ENCODE measurements at regions of chr1 and their contacts with region 1.

Region 1: GRCh38 chr1:59947047-59947938 is 20.7 kb upstream of the CYP2J2 start:
- DNase-seq: peak; percentile 63
- ATAC-seq: peak; percentile 99
- H3K4me3 ChIP-seq: no peak overlapping the region
- H3K27ac ChIP-seq: no peak overlapping the region
- H3K4me1 ChIP-seq: no peaks in the 10 kb centered on the region
- H3K27me3 ChIP-seq: no peaks in the 10 kb centered on the region; the same call in 1 of the 2 replicates
- CTCF ChIP-seq: peak; percentile 83
- POLR2A ChIP-seq: no peak
- RAD21 ChIP-seq: peak; percentile 81

Region 2: DNA sequence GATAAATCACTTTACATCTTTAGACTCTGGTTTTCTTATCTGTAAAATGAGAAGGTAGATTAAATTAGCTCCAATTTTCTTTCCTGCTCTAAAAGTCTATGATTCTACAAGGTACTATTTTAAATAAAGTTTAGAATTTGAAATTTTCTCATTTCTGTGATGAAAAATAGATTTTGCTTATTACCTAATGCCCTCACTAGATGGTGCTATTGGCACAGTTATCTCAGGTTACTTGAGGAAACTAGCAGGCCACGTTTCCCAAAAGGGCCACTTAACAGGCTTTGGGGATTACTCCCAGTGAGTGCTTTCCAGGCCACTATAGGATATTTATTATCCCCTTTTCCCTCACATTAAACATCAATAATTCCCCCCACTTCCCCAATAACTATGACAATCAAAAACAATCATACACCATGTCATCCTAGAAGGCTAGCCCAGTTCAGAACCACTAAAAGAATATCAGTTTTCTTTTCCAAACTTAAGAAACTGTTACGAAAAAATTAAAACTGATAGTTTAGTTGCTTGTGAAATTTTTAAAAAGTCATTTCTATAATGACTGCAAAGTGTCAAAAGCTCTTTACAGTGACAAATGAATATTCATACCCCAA is 1431.4 kb before region 1 on chr1:
- CTCF ChIA-PET with region 1: no interaction called
- POLR2A ChIA-PET with region 1: no interaction called
- dilution Hi-C with region 1: no loop called
- in situ Hi-C with region 1: no loop called
- intact Hi-C with region 1: loop called (anchors 5 kb)
- DNase-seq: peak; percentile 85
- ATAC-seq: peak; percentile 79
- H3K4me3 ChIP-seq: no peak overlapping the region
- H3K27ac ChIP-seq: no peak overlapping the region
- H3K4me1 ChIP-seq: no peaks in the 10 kb centered on the region
- H3K27me3 ChIP-seq: no peaks in the 10 kb centered on the region
- CTCF ChIP-seq: peak; percentile 85
- POLR2A ChIP-seq: no peak
- RAD21 ChIP-seq: peak; percentile 86

Region 3: DNA sequence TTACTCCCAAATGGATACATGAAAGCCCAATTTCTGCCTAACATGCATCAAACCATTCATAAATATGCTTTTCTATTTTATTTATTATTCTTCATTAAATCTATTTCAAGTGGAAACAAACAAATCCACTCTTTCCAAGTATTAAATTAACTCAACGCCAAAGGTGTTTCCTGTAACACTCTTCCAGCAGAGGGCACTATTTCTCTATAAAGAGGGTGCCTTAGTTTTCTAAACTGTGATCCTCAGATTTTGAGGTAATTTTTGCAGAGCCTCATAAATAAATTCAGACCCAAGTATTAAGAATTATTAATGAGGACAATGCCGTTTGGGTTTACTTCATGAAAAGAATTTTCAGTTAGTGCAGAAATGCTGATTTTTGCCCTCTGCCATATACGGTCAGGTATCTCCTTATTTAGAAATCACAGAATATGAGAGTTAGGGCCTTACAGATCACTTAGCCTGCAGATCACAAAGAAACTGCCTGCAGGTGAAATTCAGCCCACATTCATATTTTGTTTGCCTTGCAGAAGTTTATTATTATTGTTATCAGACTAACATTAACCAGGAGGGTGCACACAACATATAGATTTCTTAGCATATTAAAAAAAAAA is 1207.3 kb before region 1 on chr1:
- CTCF ChIA-PET with region 1: no interaction called
- POLR2A ChIA-PET with region 1: no interaction called
- dilution Hi-C with region 1: no loop called
- in situ Hi-C with region 1: loop called (anchors 25 kb)
- intact Hi-C with region 1: loop called (anchors 5 kb)
- DNase-seq: peak; percentile 71
- ATAC-seq: peak; percentile 64; the same call in 1 of the 2 replicates
- H3K4me3 ChIP-seq: no peak overlapping the region
- H3K27ac ChIP-seq: no peak overlapping the region
- H3K4me1 ChIP-seq: no peaks in the 10 kb centered on the region
- H3K27me3 ChIP-seq: no peaks in the 10 kb centered on the region
- CTCF ChIP-seq: peak; percentile 93
- POLR2A ChIP-seq: no peak
- RAD21 ChIP-seq: peak; percentile 94

Region 4: DNA sequence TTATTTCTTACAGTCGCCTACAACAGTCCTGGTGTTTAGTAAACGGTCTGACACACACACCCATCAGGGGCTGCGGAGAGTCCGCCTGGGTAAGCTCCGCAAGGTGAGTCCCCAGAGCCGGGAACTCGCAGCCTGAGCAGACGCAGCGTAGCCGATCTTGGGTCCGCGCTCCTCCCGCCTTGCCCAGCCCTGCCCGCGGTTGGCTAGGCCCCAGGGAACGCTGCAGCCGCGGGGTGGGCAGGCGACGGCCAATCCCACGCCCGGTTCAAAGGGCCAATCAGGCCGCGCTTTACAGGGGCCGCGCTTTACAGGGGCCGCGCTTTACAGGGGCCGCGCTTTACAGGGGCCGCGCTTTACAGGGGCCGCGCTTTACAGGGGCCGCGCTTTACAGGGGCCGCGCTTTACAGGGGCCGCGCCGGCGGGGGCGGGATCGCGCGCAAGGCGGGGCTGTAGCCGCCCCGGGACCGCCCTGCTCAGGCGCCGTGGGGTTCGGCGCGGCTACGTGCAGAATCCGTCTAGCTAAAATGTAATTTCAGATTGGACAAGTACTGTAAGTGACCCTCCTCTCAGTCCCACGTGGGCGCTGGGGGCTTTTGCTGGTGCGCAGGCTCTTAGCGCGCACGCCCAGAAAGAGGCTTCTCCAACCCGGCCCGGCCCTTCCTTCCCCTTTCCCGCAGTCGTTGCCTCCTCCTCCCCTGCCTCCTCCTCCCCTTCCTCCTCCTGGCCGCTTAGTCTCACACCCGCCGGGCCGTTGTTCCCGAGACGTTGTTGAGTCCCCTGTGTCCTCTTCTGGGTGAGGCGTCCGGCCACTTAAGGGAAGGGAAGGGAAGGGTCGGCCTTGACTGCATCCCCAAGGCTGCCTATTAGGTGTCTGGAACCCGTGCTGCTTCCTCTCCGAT is 650.7 kb before region 1 on chr1 and contains the start of gene FGGY:
- CTCF ChIA-PET with region 1: no interaction called
- POLR2A ChIA-PET with region 1: no interaction called
- dilution Hi-C with region 1: no loop called
- in situ Hi-C with region 1: no loop called
- intact Hi-C with region 1: loop called (anchors 5 kb)
- DNase-seq: peak; percentile 98
- ATAC-seq: peak; percentile 93
- H3K4me3 ChIP-seq: peak within 1 kb of the TSS; percentile 74
- H3K27ac ChIP-seq: peak within 1 kb of the TSS; percentile 99
- H3K4me1 ChIP-seq: peaks cover 6% of the 10 kb centered on the region
- H3K27me3 ChIP-seq: no peaks in the 10 kb centered on the region
- CTCF ChIP-seq: no peak
- POLR2A ChIP-seq: peak; percentile 84
- RAD21 ChIP-seq: peak; percentile 29; the same call in 1 of the 2 replicates
- total RNA-seq, gene FGGY: 12.8 and 14.0 TPM in 2 replicates

Region 5: DNA sequence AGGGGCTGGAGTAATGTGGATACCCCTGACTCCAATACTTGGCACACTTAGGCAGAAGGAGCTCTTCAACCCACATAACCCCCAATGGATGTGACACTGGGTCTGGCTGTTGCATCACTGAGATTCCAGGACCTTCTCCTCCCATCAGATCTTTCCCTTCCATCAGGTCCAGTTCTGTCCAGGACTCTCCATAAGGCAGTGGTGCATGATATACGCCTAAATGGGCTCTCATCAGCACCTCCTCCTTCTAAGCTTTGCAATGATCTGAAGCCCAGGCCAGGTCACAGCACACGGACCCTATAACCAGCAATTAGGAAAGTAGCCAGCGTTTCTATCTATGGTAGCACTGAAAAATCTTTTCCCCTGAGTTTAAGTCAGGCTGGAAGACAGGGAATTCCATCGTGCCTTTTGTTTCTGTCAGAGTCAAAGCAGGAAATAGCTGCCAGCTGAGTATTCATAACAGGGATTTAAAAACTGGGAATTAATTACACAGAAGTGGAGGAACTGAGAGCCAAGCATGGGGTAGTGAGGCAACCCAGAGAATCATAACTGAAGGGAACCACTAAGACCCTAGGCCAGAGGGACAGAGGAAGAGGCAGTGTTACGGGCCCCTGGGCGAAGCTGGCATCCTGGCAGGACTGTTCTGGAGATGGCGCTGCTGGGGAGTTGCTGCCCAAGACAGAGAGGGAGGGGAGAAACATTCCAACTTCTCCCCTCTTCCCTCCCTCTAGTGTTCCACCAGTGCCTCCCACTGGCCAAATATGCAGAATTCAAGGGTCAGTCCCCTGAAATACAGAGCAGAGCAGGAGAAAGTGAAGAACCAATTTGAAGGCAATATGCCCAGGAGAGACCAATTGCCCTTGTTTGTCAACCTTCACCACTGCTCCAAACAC is 170.1 kb before region 1 on chr1:
- CTCF ChIA-PET with region 1: interaction called, 4 read pairs
- POLR2A ChIA-PET with region 1: no interaction called
- dilution Hi-C with region 1: no loop called
- in situ Hi-C with region 1: no loop called
- intact Hi-C with region 1: loop called (anchors 5 kb)
- DNase-seq: peak; percentile 56
- ATAC-seq: peak; percentile 88
- H3K4me3 ChIP-seq: no peak overlapping the region
- H3K27ac ChIP-seq: peak overlapping the region; percentile 79
- H3K4me1 ChIP-seq: peaks cover 11% of the 10 kb centered on the region
- H3K27me3 ChIP-seq: no peaks in the 10 kb centered on the region
- CTCF ChIP-seq: 0 out of 2 replicates have a peak, but pooled peaks have one; percentile 11
- POLR2A ChIP-seq: no peak
- RAD21 ChIP-seq: no peak; the same call in 1 of the 2 replicates